Activated CD8-positive, alpha-beta T cell treated with anti-CD3 and anti-CD28 coated beads for 36 hours (primary cell): ENCODE measurements at regions of chr6 and their contacts with region 1.

Region 1: GRCh38 chr6:18823782-18824386 is 436.7 kb downstream of the RNF144B start:
- DNase-seq: peak; percentile 73
- ATAC-seq: no peak
- H3K4me3 Mint-ChIP-seq: no peak overlapping the region
- H3K27ac Mint-ChIP-seq: no peak overlapping the region
- H3K4me1 Mint-ChIP-seq: no peaks in the 10 kb centered on the region
- H3K27me3 Mint-ChIP-seq: no peaks in the 10 kb centered on the region
- CTCF ChIP-seq: peak; percentile 82

Region 2: GRCh38 chr6:18595774-18596530 is 227.9 kb before region 1 on chr6:
- CTCF ChIA-PET with region 1: no interaction called
- POLR2A ChIA-PET with region 1: no interaction called
- intact Hi-C with region 1: loop called (anchors 10 kb)
- DNase-seq: peak; percentile 50
- ATAC-seq: peak; percentile 55
- H3K4me3 Mint-ChIP-seq: no peak overlapping the region
- H3K27ac Mint-ChIP-seq: no peak overlapping the region
- H3K4me1 Mint-ChIP-seq: no peaks in the 10 kb centered on the region
- H3K27me3 Mint-ChIP-seq: peaks cover 10% of the 10 kb centered on the region
- CTCF ChIP-seq: peak; percentile 94

Region 3: DNA sequence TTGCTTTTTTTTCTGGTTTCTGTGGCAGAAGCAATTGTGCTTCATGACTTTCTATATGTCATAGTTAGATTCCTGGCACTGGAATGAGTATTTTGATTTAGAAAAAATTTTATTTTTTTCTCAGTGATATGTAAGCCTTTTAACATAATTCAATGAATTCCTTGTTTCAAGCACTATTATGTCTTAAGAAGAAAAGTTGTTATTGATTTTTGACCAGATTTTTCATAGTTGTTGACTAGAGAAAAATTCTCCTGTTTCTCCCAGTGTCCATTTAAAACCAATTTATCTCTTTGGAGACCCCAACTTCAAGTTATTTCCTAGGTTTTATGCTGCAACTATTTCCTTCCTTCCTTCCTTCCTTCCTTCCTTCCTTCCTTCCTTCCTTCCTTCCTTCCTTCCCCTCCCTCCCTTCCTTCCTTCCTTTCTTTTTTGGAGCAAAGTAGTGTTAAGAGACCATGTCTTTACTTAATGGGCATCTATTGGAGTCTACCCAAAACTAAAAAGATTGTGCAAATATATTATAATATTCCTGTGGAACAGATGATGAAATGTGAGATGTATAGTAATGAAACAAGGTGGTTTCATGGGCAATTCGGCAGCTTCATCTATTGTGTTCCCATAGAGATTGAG is 89.8 kb before region 1 on chr6:
- CTCF ChIA-PET with region 1: no interaction called
- POLR2A ChIA-PET with region 1: no interaction called
- intact Hi-C with region 1: no loop called
- DNase-seq: no peak
- ATAC-seq: no peak
- H3K4me3 Mint-ChIP-seq: no peak overlapping the region
- H3K27ac Mint-ChIP-seq: no peak overlapping the region
- H3K4me1 Mint-ChIP-seq: no peaks in the 10 kb centered on the region
- H3K27me3 Mint-ChIP-seq: no peaks in the 10 kb centered on the region
- CTCF ChIP-seq: no peak

Region 4: GRCh38 chr6:18746727-18747126 is 77.2 kb before region 1 on chr6:
- CTCF ChIA-PET with region 1: no interaction called
- POLR2A ChIA-PET with region 1: no interaction called
- intact Hi-C with region 1: no loop called
- DNase-seq: no peak
- ATAC-seq: no peak
- H3K4me3 Mint-ChIP-seq: no peak overlapping the region
- H3K27ac Mint-ChIP-seq: no peak overlapping the region
- H3K4me1 Mint-ChIP-seq: no peaks in the 10 kb centered on the region
- H3K27me3 Mint-ChIP-seq: no peaks in the 10 kb centered on the region
- CTCF ChIP-seq: no peak